ENCODE measurements at regions of chr6 and their contacts with region 1.

Region 1: GRCh38 chr6:159238920-159239558 is 69.8 kb downstream of the FNDC1 start:
- DNase-seq: no peak
- ATAC-seq: no peak
- H3K4me3 ChIP-seq: no peak overlapping the region
- H3K4me3 Mint-ChIP-seq: no peak overlapping the region
- H3K27ac ChIP-seq: no peak overlapping the region
- H3K27ac Mint-ChIP-seq: no peak overlapping the region
- H3K4me1 ChIP-seq: no peaks in the 10 kb centered on the region
- H3K4me1 Mint-ChIP-seq: peaks cover 2% of the 10 kb centered on the region
- H3K27me3 ChIP-seq: peaks cover 0 to 12% (median 9%) of the 10 kb centered on the region in 4 experiments
- H3K27me3 Mint-ChIP-seq: peaks cover 46% of the 10 kb centered on the region
- CTCF ChIP-seq: no peak

Region 2: GRCh38 chr6:159104163-159104925 is 134.7 kb before region 1 on chr6:
- CTCF ChIA-PET with region 1: no interaction called
- POLR2A ChIA-PET with region 1: no interaction called
- intact Hi-C with region 1: no loop called
- DNase-seq: peak; percentile 88
- ATAC-seq: peak; percentile 44
- H3K4me3 ChIP-seq: peak overlapping the region in 3 of 5 experiments; percentile 2 to 45 (median 3)
- H3K4me3 Mint-ChIP-seq: peak overlapping the region; percentile 73
- H3K27ac ChIP-seq: peak overlapping the region; percentile 94 to 99
- H3K27ac Mint-ChIP-seq: peak overlapping the region; percentile 98
- H3K4me1 ChIP-seq: peaks cover 76 to 87% of the 10 kb centered on the region in 2 donors
- H3K4me1 Mint-ChIP-seq: peaks cover 90% of the 10 kb centered on the region
- H3K27me3 ChIP-seq: no peaks in the 10 kb centered on the region
- H3K27me3 Mint-ChIP-seq: no peaks in the 10 kb centered on the region
- CTCF ChIP-seq: peak; percentile 93

Region 3: DNA sequence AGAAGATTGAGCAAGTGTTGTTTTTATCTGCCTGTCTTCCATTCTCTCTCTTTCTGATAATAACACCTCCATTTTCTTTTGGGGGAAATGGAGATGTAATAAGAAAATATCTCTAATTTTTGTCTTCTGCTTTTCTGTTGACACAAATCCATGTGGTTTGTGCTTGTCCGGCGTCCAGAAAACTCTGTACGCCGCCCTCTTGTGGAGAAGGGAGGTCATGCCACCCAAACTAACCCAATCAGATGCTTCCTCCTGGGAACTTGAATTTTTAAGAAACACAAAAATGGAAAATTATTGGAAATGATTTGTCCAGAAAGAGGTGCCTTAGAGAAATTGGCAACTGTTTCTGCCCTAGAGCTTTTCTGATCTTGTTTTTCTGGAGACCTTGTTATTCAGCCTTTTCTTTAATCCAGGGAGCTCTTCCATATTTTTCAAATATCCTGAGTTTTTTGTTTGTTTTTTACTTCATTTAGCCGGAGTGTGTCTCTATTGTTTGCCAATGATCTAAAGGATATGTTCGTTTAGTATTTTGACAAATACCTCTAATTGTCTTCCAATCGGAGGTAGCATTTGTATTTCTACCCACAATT is 87.7 kb before region 1 on chr6:
- CTCF ChIA-PET with region 1: no interaction called
- POLR2A ChIA-PET with region 1: no interaction called
- intact Hi-C with region 1: no loop called
- DNase-seq: peak; percentile 74
- ATAC-seq: peak; percentile 79
- H3K4me3 ChIP-seq: no peak overlapping the region
- H3K4me3 Mint-ChIP-seq: no peak overlapping the region
- H3K27ac ChIP-seq: no peak overlapping the region
- H3K27ac Mint-ChIP-seq: no peak overlapping the region
- H3K4me1 ChIP-seq: peaks cover 3 to 4% of the 10 kb centered on the region in 2 donors
- H3K4me1 Mint-ChIP-seq: peaks cover 3% of the 10 kb centered on the region
- H3K27me3 ChIP-seq: no peaks in the 10 kb centered on the region
- H3K27me3 Mint-ChIP-seq: peaks cover 3% of the 10 kb centered on the region
- CTCF ChIP-seq: peak; percentile 94

Region 4: GRCh38 chr6:159252955-159253508 is 14.0 kb after region 1 on chr6:
- CTCF ChIA-PET with region 1: interaction called, 14 read pairs
- POLR2A ChIA-PET with region 1: no interaction called
- intact Hi-C with region 1: no loop called
- DNase-seq: peak; percentile 46
- ATAC-seq: no peak
- H3K4me3 ChIP-seq: no peak overlapping the region
- H3K4me3 Mint-ChIP-seq: no peak overlapping the region
- H3K27ac ChIP-seq: no peak overlapping the region
- H3K27ac Mint-ChIP-seq: no peak overlapping the region
- H3K4me1 ChIP-seq: peaks cover 0 to 2% of the 10 kb centered on the region in 2 donors
- H3K4me1 Mint-ChIP-seq: no peaks in the 10 kb centered on the region
- H3K27me3 ChIP-seq: peaks cover 0 to 4% (median 0%) of the 10 kb centered on the region in 4 experiments
- H3K27me3 Mint-ChIP-seq: peaks cover 4% of the 10 kb centered on the region
- CTCF ChIP-seq: peak; percentile 65

Region 5: DNA sequence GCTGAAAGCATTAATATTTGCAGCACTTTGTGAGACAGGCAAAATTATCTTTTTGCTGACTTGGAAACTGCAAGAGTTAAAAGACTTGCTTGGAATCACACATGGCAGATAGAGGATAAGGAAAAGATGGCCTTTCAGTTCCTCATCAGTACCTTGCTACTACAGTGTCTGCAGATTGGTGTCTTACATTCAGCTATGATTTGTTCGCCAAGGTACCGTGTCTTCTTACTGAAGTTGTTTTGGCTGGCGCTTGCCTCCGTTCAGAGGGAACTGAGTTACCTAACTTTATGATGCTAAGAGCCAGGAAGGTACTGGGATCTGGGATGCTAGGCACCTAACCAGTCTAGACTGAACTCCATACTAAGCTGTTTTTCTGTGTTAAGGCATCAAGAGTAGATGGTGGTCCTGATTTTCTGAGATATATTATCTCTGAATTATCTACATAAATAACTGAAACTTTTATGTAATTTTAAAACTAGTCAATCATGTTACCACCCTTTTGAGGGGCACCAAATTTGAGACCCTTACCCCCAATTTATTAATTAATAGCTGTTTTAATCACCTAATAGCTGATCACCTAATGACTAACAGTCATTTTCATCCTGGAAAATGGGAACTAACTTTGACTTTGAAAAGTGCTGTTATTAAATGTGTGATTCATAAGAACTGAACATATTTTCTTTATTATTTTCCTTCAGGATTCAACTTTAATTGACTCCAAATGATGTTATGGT is 490.7 kb after region 1 on chr6:
- CTCF ChIA-PET with region 1: no interaction called
- POLR2A ChIA-PET with region 1: no interaction called
- intact Hi-C with region 1: no loop called
- DNase-seq: peak; percentile 49
- ATAC-seq: no peak
- H3K4me3 ChIP-seq: peak overlapping the region in 2 of 5 experiments; percentile 9 to 84
- H3K4me3 Mint-ChIP-seq: peak overlapping the region; percentile 93
- H3K27ac ChIP-seq: peak overlapping the region; percentile 49 to 97
- H3K27ac Mint-ChIP-seq: peak overlapping the region; percentile 85
- H3K4me1 ChIP-seq: peaks cover 48 to 49% of the 10 kb centered on the region in 2 donors
- H3K4me1 Mint-ChIP-seq: peaks cover 61% of the 10 kb centered on the region
- H3K27me3 ChIP-seq: no peaks in the 10 kb centered on the region
- H3K27me3 Mint-ChIP-seq: no peaks in the 10 kb centered on the region
- CTCF ChIP-seq: no peak

Measured in B cell (primary cell).